ENCODE measurements at regions of chr12 and their contacts with region 1.

Region 1: GRCh38 chr12:106955377-106956047 is at the start of gene TMEM263:
- DNase-seq: peak; percentile 74 to 94 (median 86)
- H3K4me3 ChIP-seq: peak within 1 kb of the TSS; percentile 67 to 98 (median 91)
- H3K27ac ChIP-seq: peak within 1 kb of the TSS; percentile 4 to 98 (median 93)
- H3K27me3 ChIP-seq: no peaks in the 10 kb centered on the region
- CTCF ChIP-seq: peak in 22 of 56 donors; percentile 1 to 55 (median 24)
- total RNA-seq, gene TMEM263: 16.7 to 37.0 (median 26.8) TPM

Region 2: DNA sequence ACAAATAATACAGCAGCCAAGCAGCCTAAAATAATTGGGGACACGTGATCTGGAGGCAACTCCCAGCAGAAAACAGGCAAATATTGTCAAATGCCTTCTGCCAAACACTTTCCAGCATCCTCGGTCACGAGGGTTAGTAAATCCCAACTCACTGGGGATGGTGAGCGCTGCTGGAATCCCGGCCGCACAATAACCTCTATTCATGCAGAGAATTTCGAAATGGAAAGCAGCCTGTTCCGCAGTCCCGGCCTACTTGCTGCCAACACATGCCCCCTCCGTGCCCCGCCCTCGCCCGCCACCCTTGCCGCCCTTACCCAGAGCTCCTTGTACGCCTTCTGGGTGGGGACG is 310.5 kb before region 1 on chr12:
- intact Hi-C with region 1: loop called in 1 of 2 experiments (anchors 10 kb)
- DNase-seq: peak; percentile 23 to 89 (median 84)
- H3K4me3 ChIP-seq: peak overlapping the region in 38 of 59 donors; percentile 1 to 54 (median 26)
- H3K27ac ChIP-seq: peak overlapping the region in 58 of 59 donors; percentile 3 to 95 (median 83)
- H3K27me3 ChIP-seq: no peaks in the 10 kb centered on the region
- CTCF ChIP-seq: peak in 2 of 56 donors; percentile 7 to 24

Region 3: DNA sequence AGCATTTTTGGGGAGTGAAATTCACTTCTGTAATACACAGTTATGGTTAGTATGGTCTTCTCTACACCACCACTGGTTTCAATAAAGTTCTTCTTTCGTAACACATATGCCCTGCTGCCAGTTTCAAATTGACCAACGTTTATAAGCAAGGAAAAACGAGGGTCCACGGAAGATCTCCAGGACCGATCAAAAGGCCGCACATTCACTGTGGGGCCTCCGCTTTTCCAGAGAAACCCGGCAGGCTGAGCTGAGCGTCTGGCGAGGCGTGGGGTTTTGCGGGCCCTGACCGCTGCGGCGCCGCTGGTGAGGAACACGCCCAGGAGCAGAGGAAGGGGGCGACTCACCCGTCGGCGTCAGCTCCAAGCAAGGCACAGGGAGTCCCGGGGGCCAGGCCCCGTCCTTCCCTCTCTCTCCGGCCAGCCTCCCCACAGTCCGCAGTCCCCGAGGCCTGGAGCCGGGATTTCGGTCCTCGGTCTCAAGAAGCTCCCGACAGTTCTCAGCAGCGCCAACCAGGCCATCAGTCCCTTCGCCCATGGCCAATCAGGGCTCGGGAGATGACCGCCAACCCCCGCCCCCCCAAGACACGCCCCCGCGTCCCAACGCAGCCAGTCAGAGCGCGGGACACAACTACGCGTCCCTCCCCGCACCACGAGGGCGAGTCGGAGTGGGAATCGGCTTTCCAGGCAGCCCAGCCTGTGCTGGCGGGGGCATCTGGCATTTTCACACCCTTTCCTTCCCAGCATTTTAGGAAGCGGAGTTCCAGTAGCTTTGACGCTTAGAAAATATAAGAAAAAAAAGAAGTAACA is 31.3 kb after region 1 on chr12 and contains the start of gene MTERF2:
- intact Hi-C with region 1: loop called (anchors 1 to 2 kb)
- DNase-seq: peak; percentile 86 to 97 (median 94)
- H3K4me3 ChIP-seq: peak within 1 kb of the TSS; percentile 60 to 99 (median 83)
- H3K27ac ChIP-seq: peak within 1 kb of the TSS in 57 of 59 donors; percentile 58 to 97 (median 85)
- H3K27me3 ChIP-seq: no peaks in the 10 kb centered on the region
- CTCF ChIP-seq: peak in 31 of 56 donors; percentile 6 to 57 (median 30)
- total RNA-seq, gene MTERF2: 17.1 to 39.1 (median 25.8) TPM

Region 4: GRCh38 chr12:107093417-107094182 is 138.1 kb after region 1 on chr12 and contains the start of gene CRY1:
- intact Hi-C with region 1: loop called (anchors 1 kb)
- DNase-seq: peak; percentile 92 to 98 (median 94)
- H3K4me3 ChIP-seq: peak within 1 kb of the TSS; percentile 70 to 100 (median 96)
- H3K27ac ChIP-seq: peak within 1 kb of the TSS; percentile 76 to 99 (median 96)
- H3K27me3 ChIP-seq: no peaks in the 10 kb centered on the region
- CTCF ChIP-seq: peak in 19 of 56 donors; percentile 7 to 43 (median 22)
- total RNA-seq, gene CRY1: 11.9 to 34.9 (median 18.1) TPM